ENCODE measurements at regions of chr7 and their contacts with region 1.

Region 1: GRCh38 chr7:120725376-120726039 is 132.4 kb downstream of the TSPAN12 start:
- DNase-seq: no peak
- H3K4me3 ChIP-seq: no peak overlapping the region
- H3K27ac ChIP-seq: no peak overlapping the region
- H3K4me1 ChIP-seq: peaks cover 0 to 4% (median 2%) of the 10 kb centered on the region in 4 experiments; a peak in 1 of 7 replicates
- H3K27me3 ChIP-seq: no peaks in the 10 kb centered on the region
- CTCF ChIP-seq: peak in 2 of 3 experiments; percentile 44 to 47; a peak in 2 of 4 replicates
- EP300 ChIP-seq: no peak
- POLR2A ChIP-seq: no peak
- RAD21 ChIP-seq: peak; percentile 70 to 80

Region 2: GRCh38 chr7:120583899-120584586 is 141.5 kb before region 1 on chr7:
- CTCF ChIA-PET with region 1: interaction called, 14 read pairs
- POLR2A ChIA-PET with region 1: no interaction called
- DNase-seq: no peak
- H3K4me3 ChIP-seq: no peak overlapping the region
- H3K27ac ChIP-seq: no peak overlapping the region
- H3K4me1 ChIP-seq: peaks cover 0 to 2% (median 0%) of the 10 kb centered on the region in 4 experiments; a peak in 2 of 7 replicates
- H3K27me3 ChIP-seq: no peaks in the 10 kb centered on the region
- CTCF ChIP-seq: no peak
- EP300 ChIP-seq: no peak
- POLR2A ChIP-seq: no peak
- RAD21 ChIP-seq: no peak

Region 3: GRCh38 chr7:120714945-120715344 is 10.6 kb before region 1 on chr7:
- CTCF ChIA-PET with region 1: interaction called, 17 read pairs
- POLR2A ChIA-PET with region 1: no interaction called
- DNase-seq: no peak
- H3K4me3 ChIP-seq: no peak overlapping the region
- H3K27ac ChIP-seq: no peak overlapping the region
- H3K4me1 ChIP-seq: peaks cover 0 to 2% (median 0%) of the 10 kb centered on the region in 4 experiments; a peak in 3 of 7 replicates
- H3K27me3 ChIP-seq: peaks cover 0 to 1% (median 0%) of the 10 kb centered on the region in 4 experiments; a peak in 1 of 7 replicates
- CTCF ChIP-seq: no peak
- EP300 ChIP-seq: no peak
- POLR2A ChIP-seq: no peak
- RAD21 ChIP-seq: no peak

Region 4: DNA sequence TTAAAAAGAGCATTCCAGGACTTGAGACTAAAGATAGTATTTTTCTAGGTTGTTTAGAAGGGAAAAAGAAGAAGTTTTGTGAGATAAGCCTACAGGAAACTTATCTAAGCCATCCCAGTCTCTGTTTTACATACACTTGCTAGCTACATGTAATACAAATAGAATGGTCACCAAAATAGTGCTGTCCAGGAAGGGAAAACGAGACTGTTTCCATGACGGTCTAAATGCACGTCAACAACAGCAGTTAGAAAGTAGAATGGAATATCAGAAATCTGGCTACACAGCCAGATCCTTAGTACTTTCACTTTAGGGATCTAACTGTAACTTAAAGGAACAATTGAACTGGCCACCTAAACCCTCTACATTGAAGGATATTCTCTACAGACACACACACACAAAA is 14.8 kb after region 1 on chr7:
- CTCF ChIA-PET with region 1: interaction called, 19 read pairs
- POLR2A ChIA-PET with region 1: no interaction called
- DNase-seq: no peak
- H3K4me3 ChIP-seq: no peak overlapping the region
- H3K27ac ChIP-seq: no peak overlapping the region
- H3K4me1 ChIP-seq: peaks cover 0 to 5% (median 2%) of the 10 kb centered on the region in 4 experiments; a peak in 3 of 7 replicates
- H3K27me3 ChIP-seq: no peaks in the 10 kb centered on the region
- CTCF ChIP-seq: no peak
- EP300 ChIP-seq: no peak
- POLR2A ChIP-seq: no peak
- RAD21 ChIP-seq: no peak